T-cell (primary cell): ENCODE measurements at regions of chr2 and their contacts with region 1.

Region 1: DNA sequence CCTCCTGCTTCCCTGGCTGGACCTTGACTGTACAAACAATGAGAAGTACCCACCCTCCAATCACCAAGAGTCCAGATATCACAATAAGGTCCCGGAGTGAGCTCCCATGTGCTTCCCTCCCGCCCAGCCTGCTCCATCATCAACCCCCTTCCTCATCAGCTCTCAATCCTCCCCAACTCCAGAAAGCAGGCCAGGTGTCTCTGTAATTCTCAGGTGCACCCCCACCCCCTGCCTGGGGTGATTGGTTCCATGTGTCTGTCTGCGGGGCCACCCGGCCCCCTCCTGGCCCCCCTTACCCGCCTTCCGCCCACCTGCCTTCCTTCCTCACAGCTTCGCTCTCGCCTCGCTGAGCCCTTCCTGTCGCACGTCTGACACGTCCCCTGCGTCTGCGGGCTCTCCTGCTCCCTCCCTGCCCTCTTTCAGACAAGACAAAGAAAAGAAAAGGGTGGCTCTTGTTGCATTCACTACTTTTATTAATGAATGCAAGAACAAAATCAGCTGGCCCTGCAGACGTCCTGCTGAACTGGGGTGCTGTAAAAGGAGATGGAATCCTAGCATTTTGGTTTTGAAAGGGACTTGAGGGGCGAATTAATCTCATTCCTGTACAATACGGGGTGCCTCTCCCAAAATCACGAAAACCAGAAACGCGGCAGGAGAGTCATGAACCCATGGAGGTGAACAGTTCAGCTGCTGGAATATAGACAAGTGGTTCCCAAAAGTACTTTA is 26.5 kb upstream of the IGFBP2 start:
- DNase-seq: peak; percentile 1 to 58 (median 27)
- ATAC-seq: peak; percentile 81 to 96 (median 90)
- H3K4me3 ChIP-seq: peak overlapping the region; percentile 22 to 42
- H3K4me3 Mint-ChIP-seq: peak overlapping the region; percentile 18 to 71 (median 45)
- H3K27ac ChIP-seq: no peak overlapping the region
- H3K27ac Mint-ChIP-seq: no peak overlapping the region
- H3K4me1 ChIP-seq: peaks cover 11 to 15% of the 10 kb centered on the region in 2 experiments
- H3K4me1 Mint-ChIP-seq: peaks cover 9 to 10% (median 9%) of the 10 kb centered on the region in 3 donors
- H3K27me3 ChIP-seq: peaks cover 0 to 19% of the 10 kb centered on the region in 2 experiments
- H3K27me3 Mint-ChIP-seq: peaks cover 4 to 28% of the 10 kb centered on the region in 2 donors

Region 2: DNA sequence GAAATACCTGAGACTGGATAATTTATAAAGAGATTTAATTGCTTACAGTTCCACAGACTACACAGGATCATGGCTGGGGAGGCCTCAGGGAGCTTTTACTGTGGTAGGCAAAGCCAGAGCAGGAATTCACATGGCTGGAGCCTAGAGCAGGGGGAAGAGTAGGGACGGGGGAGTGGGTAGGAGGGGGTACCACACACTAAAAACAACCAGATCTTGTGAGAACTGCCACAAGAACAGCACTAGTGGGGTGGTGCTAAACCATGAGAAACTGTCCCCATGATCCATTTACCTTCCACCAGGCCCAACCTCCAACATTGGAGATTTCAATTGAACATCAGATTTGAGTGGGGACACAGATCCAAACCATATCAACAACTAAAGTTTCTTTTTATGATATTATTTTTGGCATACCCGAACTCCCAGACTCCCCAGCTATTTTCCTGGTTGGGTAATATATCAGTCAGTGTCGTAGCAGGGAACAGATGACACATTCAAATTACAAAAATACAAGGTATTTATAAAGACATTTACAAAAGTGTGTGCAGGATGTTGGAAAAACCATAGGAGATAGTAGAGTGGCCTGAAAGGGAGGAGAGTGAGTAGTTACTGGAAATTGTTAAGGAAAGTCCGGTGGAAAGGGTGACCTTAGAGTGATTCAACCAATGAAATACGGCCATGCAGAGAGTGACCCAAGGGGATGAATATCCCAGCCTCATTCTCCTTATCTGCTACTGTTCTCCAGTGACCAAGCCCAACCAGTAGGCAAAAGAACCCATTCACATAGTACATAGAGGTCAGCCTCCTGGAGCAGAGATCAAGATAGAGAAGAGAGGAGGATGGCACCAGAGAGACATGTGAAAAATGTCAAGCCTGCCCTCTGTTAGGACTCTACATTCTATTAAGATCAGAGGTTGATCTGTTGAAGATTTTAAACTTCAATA is 99.2 kb before region 1 on chr2:
- CTCF ChIA-PET with region 1: interaction called in 1 of 2 experiments, 10 read pairs
- POLR2A ChIA-PET with region 1: no interaction called
- DNase-seq: no peak
- ATAC-seq: peak in 1 of 4 experiments; percentile 20
- H3K4me3 ChIP-seq: no peak overlapping the region
- H3K4me3 Mint-ChIP-seq: no peak overlapping the region
- H3K27ac ChIP-seq: no peak overlapping the region
- H3K27ac Mint-ChIP-seq: no peak overlapping the region
- H3K4me1 ChIP-seq: no peaks in the 10 kb centered on the region
- H3K4me1 Mint-ChIP-seq: peaks cover 6 to 16% (median 15%) of the 10 kb centered on the region in 3 donors
- H3K27me3 ChIP-seq: no peaks in the 10 kb centered on the region
- H3K27me3 Mint-ChIP-seq: no peaks in the 10 kb centered on the region

Region 3: DNA sequence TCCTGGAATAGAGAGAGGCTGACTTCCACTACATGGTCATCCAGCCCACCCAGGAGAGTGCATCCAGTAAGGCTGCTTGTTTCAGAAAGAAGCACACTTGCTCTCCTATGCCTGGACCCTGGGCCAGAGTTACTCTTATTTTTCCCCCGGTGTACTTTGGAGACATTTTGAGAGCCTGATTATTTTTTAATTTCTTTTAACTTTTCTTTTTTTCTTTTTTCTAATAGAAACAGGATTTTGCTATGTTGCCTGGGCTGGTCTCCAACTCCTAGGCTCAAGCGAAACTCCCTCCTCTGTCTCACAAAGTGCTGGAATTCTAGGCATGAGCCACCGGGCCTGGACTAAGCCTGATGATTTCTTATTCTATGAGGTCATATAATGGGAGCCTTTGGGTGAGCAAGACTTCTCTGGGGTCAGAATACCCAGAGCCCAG is 45.9 kb before region 1 on chr2:
- CTCF ChIA-PET with region 1: no interaction called
- POLR2A ChIA-PET with region 1: no interaction called
- DNase-seq: no peak
- ATAC-seq: no peak
- H3K4me3 ChIP-seq: no peak overlapping the region
- H3K4me3 Mint-ChIP-seq: no peak overlapping the region
- H3K27ac ChIP-seq: no peak overlapping the region
- H3K27ac Mint-ChIP-seq: no peak overlapping the region
- H3K4me1 ChIP-seq: no peaks in the 10 kb centered on the region
- H3K4me1 Mint-ChIP-seq: no peaks in the 10 kb centered on the region
- H3K27me3 ChIP-seq: no peaks in the 10 kb centered on the region
- H3K27me3 Mint-ChIP-seq: peaks cover 17 to 18% of the 10 kb centered on the region in 2 donors

Region 4: GRCh38 chr2:216666461-216667233 is 59.9 kb after region 1 on chr2:
- CTCF ChIA-PET with region 1: interaction called in 1 of 2 experiments, 4 read pairs
- POLR2A ChIA-PET with region 1: interaction called in 1 of 2 experiments, 13 read pairs
- DNase-seq: peak; percentile 20 to 81 (median 55)
- ATAC-seq: peak; percentile 68 to 75 (median 72)
- H3K4me3 ChIP-seq: no peak overlapping the region
- H3K4me3 Mint-ChIP-seq: no peak overlapping the region
- H3K27ac ChIP-seq: no peak overlapping the region
- H3K27ac Mint-ChIP-seq: no peak overlapping the region
- H3K4me1 ChIP-seq: no peaks in the 10 kb centered on the region
- H3K4me1 Mint-ChIP-seq: no peaks in the 10 kb centered on the region
- H3K27me3 ChIP-seq: peaks cover 0 to 37% of the 10 kb centered on the region in 2 experiments
- H3K27me3 Mint-ChIP-seq: peaks cover 18 to 21% of the 10 kb centered on the region in 2 donors